Activated CD4-positive, alpha-beta T cell treated with anti-CD3 and anti-CD28 coated beads for 36 hours (primary cell): ENCODE measurements at regions of chr2 and their contacts with region 1.

Region 1: GRCh38 chr2:241877989-241878970 is 8.8 kb downstream of the RTP5 start:
- DNase-seq: peak; percentile 88
- ATAC-seq: peak; percentile 21
- H3K4me3 Mint-ChIP-seq: no peak overlapping the region
- H3K27ac Mint-ChIP-seq: no peak overlapping the region
- H3K4me1 Mint-ChIP-seq: peaks cover 26% of the 10 kb centered on the region
- H3K27me3 Mint-ChIP-seq: no peaks in the 10 kb centered on the region

Region 2: DNA sequence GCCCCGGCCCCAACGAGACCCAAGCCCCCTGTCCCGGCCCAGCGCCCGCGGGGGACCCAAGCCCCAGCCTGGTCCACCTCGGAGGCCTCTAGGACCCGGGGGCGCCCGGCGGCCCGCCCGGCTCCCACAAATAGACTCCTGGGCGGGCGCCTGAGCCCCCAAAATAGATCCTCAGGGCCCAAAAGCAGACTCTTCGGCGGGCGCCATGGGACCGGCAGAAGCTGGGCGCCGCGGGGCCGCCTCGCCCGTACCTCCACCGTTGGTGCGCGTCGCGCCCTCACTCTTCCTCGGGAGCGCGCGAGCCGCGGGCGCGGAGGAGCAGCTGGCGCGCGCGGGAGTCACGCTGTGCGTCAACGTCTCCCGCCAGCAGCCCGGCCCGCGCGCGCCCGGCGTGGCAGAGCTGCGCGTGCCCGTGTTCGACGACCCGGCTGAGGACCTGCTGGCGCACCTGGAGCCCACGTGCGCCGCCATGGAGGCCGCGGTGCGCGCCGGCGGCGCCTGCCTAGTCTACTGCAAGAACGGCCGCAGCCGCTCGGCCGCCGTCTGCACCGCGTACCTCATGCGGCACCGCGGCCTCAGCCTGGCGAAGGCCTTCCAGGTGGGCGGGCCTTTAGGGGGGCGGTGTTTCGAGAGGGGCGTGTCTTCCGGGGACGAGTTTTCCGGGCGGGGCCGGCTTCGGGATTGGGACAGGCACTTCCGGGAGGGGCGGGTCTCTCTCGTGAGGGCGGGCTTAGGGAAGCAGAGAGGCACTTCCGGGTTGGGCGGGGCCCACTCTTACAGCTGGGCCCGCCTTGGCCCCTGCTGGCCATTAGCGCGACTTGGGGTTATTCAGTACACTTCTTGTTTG is 1317.6 kb before region 1 on chr2:
- CTCF ChIA-PET with region 1: no interaction called
- POLR2A ChIA-PET with region 1: no interaction called
- intact Hi-C with region 1: loop called (anchors 1 to 10 kb)
- DNase-seq: peak; percentile 100
- ATAC-seq: peak; percentile 60
- H3K4me3 Mint-ChIP-seq: peak overlapping the region; percentile 82
- H3K27ac Mint-ChIP-seq: peak overlapping the region; percentile 89
- H3K4me1 Mint-ChIP-seq: peaks cover 76% of the 10 kb centered on the region
- H3K27me3 Mint-ChIP-seq: no peaks in the 10 kb centered on the region

Region 3: DNA sequence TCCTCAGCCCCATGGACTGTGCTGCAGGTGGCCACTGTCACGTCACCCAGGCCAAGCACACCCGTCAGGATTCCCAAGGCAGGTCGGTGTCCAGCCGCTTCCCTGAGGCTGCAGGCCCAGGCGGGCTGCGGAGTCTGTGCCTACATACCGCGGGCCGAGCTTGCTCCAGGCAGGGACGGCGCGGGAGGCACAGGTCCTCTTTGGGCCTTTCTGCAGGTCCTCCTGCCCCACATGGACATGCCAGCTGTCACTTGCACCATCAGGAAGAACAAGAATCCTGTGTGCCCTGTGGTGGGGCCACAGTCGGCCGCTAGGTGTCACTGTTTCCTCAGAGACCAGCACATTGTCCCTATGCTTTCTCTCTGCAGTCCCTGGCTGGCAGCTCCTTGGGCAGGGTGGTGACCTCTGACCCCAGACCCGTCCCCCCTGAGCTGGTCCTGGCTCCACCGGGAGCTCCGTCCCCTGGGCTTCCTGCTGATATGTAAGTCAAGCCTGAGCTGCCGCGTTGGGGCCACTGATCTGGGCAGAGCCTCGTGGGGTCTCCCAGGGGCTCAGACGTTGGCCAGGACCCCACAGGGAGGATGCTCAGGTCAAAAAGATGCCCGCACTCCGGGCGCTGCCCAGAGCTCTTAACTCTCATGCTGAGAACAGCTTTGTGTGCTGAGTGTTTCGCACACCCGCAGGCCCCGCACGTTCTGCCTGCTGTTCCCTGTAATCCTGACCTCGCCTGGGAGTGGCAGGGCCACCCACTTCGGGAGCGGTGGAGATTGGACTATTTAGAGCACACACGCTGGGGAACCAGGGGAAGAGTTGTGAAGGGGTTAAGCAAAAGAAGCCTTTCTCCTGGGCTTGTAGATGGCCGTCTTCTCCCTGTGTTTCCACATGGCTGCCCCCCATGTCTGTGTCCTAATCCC is 1026.9 kb before region 1 on chr2:
- CTCF ChIA-PET with region 1: no interaction called
- POLR2A ChIA-PET with region 1: no interaction called
- intact Hi-C with region 1: loop called in 1 of 2 experiments (anchors 5 kb)
- DNase-seq: peak; percentile 91
- ATAC-seq: peak; percentile 97
- H3K4me3 Mint-ChIP-seq: no peak overlapping the region
- H3K27ac Mint-ChIP-seq: no peak overlapping the region
- H3K4me1 Mint-ChIP-seq: no peaks in the 10 kb centered on the region
- H3K27me3 Mint-ChIP-seq: peaks cover 3% of the 10 kb centered on the region

Region 4: GRCh38 chr2:241609859-241610793 is 268.2 kb before region 1 on chr2:
- CTCF ChIA-PET with region 1: no interaction called
- POLR2A ChIA-PET with region 1: no interaction called
- intact Hi-C with region 1: loop called in 1 of 2 experiments (anchors 1 kb)
- DNase-seq: peak; percentile 96
- ATAC-seq: peak; percentile 100
- H3K4me3 Mint-ChIP-seq: peak overlapping the region; percentile 48
- H3K27ac Mint-ChIP-seq: peak overlapping the region; percentile 67
- H3K4me1 Mint-ChIP-seq: peaks cover 14% of the 10 kb centered on the region
- H3K27me3 Mint-ChIP-seq: no peaks in the 10 kb centered on the region

Region 5: GRCh38 chr2:241702132-241703031 is 175.9 kb before region 1 on chr2:
- CTCF ChIA-PET with region 1: interaction called, 4 read pairs
- POLR2A ChIA-PET with region 1: interaction called, 3 read pairs
- intact Hi-C with region 1: loop called (anchors 1 kb)
- DNase-seq: peak; percentile 94
- ATAC-seq: peak; percentile 70
- H3K4me3 Mint-ChIP-seq: peak overlapping the region; percentile 86
- H3K27ac Mint-ChIP-seq: peak overlapping the region; percentile 75
- H3K4me1 Mint-ChIP-seq: peaks cover 29% of the 10 kb centered on the region
- H3K27me3 Mint-ChIP-seq: no peaks in the 10 kb centered on the region

Region 6: GRCh38 chr2:241865957-241866789 is 12.1 kb before region 1 on chr2:
- CTCF ChIA-PET with region 1: interaction called, 33 read pairs
- POLR2A ChIA-PET with region 1: interaction called, 13 read pairs
- intact Hi-C with region 1: no loop called
- DNase-seq: peak; percentile 70
- ATAC-seq: no peak
- H3K4me3 Mint-ChIP-seq: no peak overlapping the region
- H3K27ac Mint-ChIP-seq: no peak overlapping the region
- H3K4me1 Mint-ChIP-seq: peaks cover 80% of the 10 kb centered on the region
- H3K27me3 Mint-ChIP-seq: peaks cover 24% of the 10 kb centered on the region